Activated naive CD4-positive, alpha-beta T cell treated with anti-CD3 and anti-CD28 coated beads for 36 hours (primary cell): ENCODE measurements at regions of chr12 and their contacts with region 1.

Region 1: GRCh38 chr12:101839324-101840283 is 8.8 kb upstream of the GNPTAB start:
- DNase-seq: peak; percentile 84
- H3K4me3 Mint-ChIP-seq: no peak overlapping the region
- H3K27ac Mint-ChIP-seq: no peak overlapping the region
- H3K4me1 Mint-ChIP-seq: peaks cover 5% of the 10 kb centered on the region
- H3K27me3 Mint-ChIP-seq: no peaks in the 10 kb centered on the region

Region 2: GRCh38 chr12:101490286-101490920 is 349.2 kb before region 1 on chr12:
- CTCF ChIA-PET with region 1: interaction called, 6 read pairs
- intact Hi-C with region 1: loop called (anchors 1 kb)
- DNase-seq: peak; percentile 48
- H3K4me3 Mint-ChIP-seq: no peak overlapping the region
- H3K27ac Mint-ChIP-seq: no peak overlapping the region
- H3K4me1 Mint-ChIP-seq: no peaks in the 10 kb centered on the region
- H3K27me3 Mint-ChIP-seq: peaks cover 1% of the 10 kb centered on the region

Region 3: DNA sequence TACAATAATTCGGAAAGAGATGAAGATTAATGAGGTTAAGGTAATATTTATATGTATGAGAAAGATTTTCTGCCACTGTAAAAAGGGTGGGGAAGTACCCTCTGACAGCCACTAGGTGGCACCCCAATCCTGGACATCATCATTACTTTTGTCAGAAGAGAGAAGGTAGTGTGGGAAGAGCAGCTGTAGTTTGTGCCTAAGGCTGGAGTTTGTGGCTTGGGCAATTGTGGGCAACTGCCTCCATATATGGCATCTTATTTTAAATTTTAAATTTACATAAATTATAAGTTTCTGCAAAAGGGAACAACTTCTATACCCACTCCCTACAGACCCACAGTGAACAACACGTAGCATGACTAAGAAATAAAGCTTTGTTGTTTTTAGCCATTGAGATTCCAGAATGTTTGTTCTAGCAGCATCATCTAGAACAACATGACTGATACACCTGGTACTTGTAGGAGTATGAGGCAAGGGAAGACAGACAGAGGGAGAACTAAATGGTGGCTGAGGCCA is 65.9 kb before region 1 on chr12:
- CTCF ChIA-PET with region 1: interaction called, 83 read pairs
- intact Hi-C with region 1: loop called (anchors 1 kb)
- DNase-seq: peak; percentile 78
- H3K4me3 Mint-ChIP-seq: no peak overlapping the region
- H3K27ac Mint-ChIP-seq: no peak overlapping the region
- H3K4me1 Mint-ChIP-seq: peaks cover 4% of the 10 kb centered on the region
- H3K27me3 Mint-ChIP-seq: no peaks in the 10 kb centered on the region

Region 4: GRCh38 chr12:101792051-101792931 is 47.3 kb before region 1 on chr12:
- CTCF ChIA-PET with region 1: interaction called, 21 read pairs
- intact Hi-C with region 1: no loop called
- DNase-seq: no peak
- H3K4me3 Mint-ChIP-seq: no peak overlapping the region
- H3K27ac Mint-ChIP-seq: no peak overlapping the region
- H3K4me1 Mint-ChIP-seq: peaks cover 22% of the 10 kb centered on the region
- H3K27me3 Mint-ChIP-seq: no peaks in the 10 kb centered on the region

Region 5: DNA sequence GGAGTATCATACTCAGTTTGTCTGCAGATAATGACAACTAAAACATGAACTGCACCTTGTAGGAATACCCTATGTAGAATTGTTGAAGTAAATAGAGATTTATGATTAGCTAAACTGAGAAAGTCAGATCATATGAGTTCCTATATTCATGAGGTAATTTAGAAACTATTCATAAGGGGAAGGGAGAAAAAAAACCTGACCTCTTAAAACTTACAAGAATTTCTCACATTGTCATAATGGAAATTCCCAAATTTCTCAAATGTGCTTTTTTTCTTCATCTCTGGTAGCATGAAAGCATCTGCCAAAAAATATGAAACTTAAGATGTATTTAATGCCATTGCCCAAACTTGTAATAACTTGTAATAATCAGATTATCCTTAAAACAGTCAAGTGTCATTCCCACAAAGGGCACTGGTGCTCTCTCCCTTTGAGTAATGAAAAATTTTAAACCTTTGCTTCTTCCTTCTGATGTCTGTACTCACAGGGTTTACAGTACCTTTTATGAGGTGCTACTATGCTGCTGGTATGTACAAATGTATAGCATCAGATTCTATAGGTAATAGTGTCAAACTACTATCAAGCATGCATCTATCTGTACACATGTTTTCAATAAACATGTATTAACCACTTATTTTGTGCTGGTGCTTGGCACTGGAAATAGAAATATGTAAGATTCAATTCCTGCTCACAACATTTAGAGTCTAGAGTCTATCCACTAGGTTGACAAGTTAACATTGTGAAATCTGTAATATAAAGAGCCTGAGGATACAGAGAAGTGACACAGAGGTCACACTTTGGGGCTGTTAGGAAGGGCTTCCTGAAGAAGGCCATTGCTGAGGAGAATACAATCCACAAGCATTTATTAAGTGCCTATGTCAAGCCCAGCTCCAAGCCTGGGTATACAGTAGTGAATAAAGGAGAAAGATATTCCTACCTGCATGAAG is 20.3 kb after region 1 on chr12:
- CTCF ChIA-PET with region 1: interaction called, 11 read pairs
- intact Hi-C with region 1: no loop called
- DNase-seq: no peak
- H3K4me3 Mint-ChIP-seq: no peak overlapping the region
- H3K27ac Mint-ChIP-seq: peak overlapping the region; percentile 54
- H3K4me1 Mint-ChIP-seq: peaks cover 24% of the 10 kb centered on the region
- H3K27me3 Mint-ChIP-seq: peaks cover 2% of the 10 kb centered on the region